IMR-90 (cell line): ENCODE measurements at regions of chr20 and their contacts with region 1.

Region 1: DNA sequence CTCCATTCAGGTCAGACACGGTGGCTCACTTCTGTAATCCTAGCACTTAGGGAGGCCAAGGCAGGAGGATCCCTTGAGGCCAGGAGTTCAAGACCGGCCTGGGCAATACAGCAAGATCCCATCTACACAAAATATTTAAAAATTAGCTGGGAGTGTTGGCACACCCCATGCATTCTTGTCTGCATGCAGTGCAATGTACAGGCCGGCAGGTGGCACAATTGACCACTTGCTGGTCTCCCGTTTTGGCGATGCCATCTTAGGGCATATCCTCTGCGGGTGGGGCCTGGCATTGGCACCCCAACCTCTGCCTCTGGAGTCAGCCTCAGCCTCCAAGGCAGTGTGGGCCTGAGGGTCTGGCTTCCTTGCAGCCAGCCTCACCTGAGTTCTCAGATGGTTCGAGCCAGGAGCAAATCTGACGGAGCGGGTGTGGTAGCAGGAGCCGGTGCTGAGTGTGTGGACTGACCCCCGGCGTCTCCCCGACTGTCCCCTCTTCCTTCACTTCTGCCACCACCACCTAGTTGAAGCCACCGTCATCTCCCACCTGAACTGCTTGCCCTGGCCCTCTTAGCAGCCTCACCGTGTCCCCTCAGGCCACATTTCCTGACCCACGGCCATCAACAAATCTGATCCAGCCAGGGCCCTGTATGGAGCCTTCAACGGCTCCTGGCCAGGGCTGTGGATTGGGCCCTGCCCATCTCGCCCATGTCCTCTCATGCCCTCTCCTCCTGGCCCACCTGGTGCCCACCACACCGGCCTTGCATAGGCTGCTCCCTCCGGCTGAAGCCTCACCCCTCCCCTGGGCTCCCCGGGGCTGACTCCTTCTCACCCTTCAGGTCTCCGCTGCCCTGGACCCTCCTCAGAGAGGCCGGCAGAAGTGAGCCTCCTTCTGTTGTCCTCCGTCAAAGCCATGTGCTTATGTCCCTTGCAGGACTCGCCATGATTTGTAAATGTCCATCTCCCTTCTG is 44.0 kb downstream of the EFCAB8 start:
- DNase-seq: peak; percentile 41
- ATAC-seq: peak; percentile 89
- H3K4me3 ChIP-seq: no peak overlapping the region
- H3K27ac ChIP-seq: no peak overlapping the region
- H3K4me1 ChIP-seq: no peaks in the 10 kb centered on the region
- H3K27me3 ChIP-seq: peaks cover 6% of the 10 kb centered on the region; the same call in 1 of the 2 replicates
- CTCF ChIP-seq: peak; percentile 87
- POLR2A ChIP-seq: no peak
- RAD21 ChIP-seq: peak; percentile 83

Region 2: DNA sequence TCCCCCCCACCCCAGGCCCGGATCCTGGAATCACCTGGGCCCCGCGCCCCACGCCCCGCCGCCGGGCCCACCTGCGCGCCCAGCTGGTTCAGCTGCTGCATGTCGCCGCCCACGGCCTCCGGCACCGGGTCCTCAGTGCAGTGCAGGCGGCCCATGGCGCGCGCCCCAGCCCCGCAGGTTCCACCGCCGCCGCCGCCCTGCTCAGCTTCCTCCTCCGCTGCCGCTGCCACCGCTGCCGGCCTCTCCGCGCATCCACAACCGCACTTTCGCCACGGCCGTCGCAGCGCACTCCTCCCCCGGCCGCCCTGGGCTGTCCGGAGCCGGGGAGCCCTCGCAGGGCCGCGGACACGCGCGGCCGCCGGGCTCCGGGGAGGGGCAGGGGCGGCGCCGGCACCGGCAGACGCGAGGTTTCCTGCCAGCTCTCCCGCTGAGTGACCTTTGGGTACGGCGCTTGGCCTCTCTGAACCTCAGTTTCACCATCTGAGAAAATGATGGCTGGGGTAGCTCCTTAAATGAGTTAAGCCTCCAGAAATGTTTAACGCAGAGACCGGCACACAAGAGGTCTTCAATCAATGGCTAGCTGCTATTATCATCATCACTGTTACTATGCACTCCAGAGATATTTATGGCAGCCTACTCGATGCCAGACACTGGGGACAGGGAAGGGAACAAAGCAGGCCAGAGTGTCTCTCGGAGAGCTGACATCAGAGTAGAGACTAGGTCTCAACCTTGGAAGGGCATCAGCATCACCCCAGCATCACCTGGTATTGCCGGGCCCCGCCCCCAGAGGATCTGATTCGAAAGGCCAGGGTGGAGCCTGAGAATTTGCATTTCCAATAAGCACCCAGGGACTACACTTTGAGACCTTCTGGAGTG is 159.3 kb before region 1 on chr20 and contains the start of gene COMMD7:
- CTCF ChIA-PET with region 1: no interaction called
- POLR2A ChIA-PET with region 1: no interaction called
- dilution Hi-C with region 1: no loop called
- in situ Hi-C with region 1: no loop called
- intact Hi-C with region 1: no loop called
- DNase-seq: peak; percentile 44
- ATAC-seq: peak; percentile 73
- H3K4me3 ChIP-seq: peak within 1 kb of the TSS; percentile 89
- H3K27ac ChIP-seq: peak within 1 kb of the TSS; percentile 62
- H3K4me1 ChIP-seq: peaks cover 16% of the 10 kb centered on the region
- H3K27me3 ChIP-seq: no peaks in the 10 kb centered on the region
- CTCF ChIP-seq: no peak
- POLR2A ChIP-seq: 0 out of 2 replicates have a peak, but pooled peaks have one; percentile 46
- RAD21 ChIP-seq: 0 out of 2 replicates have a peak, but pooled peaks have one; percentile 2
- total RNA-seq, gene COMMD7: 46.9 and 51.8 TPM in 2 replicates

Region 3: GRCh38 chr20:32779500-32780211 is 123.1 kb before region 1 on chr20:
- CTCF ChIA-PET with region 1: no interaction called
- POLR2A ChIA-PET with region 1: no interaction called
- dilution Hi-C with region 1: no loop called
- in situ Hi-C with region 1: no loop called
- intact Hi-C with region 1: no loop called
- DNase-seq: no peak
- ATAC-seq: 0 out of 2 replicates have a peak, but pooled peaks have one; percentile 33
- H3K4me3 ChIP-seq: no peak overlapping the region
- H3K27ac ChIP-seq: no peak overlapping the region
- H3K4me1 ChIP-seq: no peaks in the 10 kb centered on the region
- H3K27me3 ChIP-seq: no peaks in the 10 kb centered on the region
- CTCF ChIP-seq: no peak
- POLR2A ChIP-seq: no peak
- RAD21 ChIP-seq: no peak

Region 4: GRCh38 chr20:32945710-32946221 is 43.0 kb after region 1 on chr20:
- CTCF ChIA-PET with region 1: interaction called, 5 read pairs
- POLR2A ChIA-PET with region 1: no interaction called
- dilution Hi-C with region 1: no loop called
- in situ Hi-C with region 1: no loop called
- intact Hi-C with region 1: loop called (anchors 1 kb)
- DNase-seq: peak; percentile 34
- ATAC-seq: peak; percentile 86
- H3K4me3 ChIP-seq: no peak overlapping the region
- H3K27ac ChIP-seq: no peak overlapping the region
- H3K4me1 ChIP-seq: no peaks in the 10 kb centered on the region
- H3K27me3 ChIP-seq: peaks cover 10% of the 10 kb centered on the region
- CTCF ChIP-seq: peak; percentile 50
- POLR2A ChIP-seq: no peak
- RAD21 ChIP-seq: peak; percentile 51

Region 5: DNA sequence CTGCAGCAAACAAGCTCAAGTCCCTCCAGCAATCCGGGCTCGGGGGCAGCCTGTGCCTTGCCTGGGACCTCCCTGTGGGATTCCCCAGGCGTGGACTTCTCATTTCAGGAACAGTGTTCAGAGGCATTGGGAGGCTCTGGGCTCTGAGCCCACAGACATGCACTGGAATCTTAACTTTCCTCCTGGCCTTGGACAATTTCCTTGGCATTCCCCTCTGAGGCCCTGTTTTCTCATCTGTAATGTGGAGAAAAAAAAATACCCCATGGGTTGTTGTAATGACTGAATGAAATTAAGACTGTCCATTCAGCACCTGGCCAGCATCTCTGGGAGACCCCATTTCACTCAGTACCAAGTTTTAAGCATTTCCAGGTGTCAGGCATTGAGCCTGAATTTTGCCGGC is 194.3 kb after region 1 on chr20:
- CTCF ChIA-PET with region 1: interaction called, 3 read pairs
- POLR2A ChIA-PET with region 1: no interaction called
- dilution Hi-C with region 1: no loop called
- in situ Hi-C with region 1: no loop called
- intact Hi-C with region 1: loop called (anchors 1 kb)
- DNase-seq: no peak
- ATAC-seq: no peak
- H3K4me3 ChIP-seq: no peak overlapping the region
- H3K27ac ChIP-seq: no peak overlapping the region
- H3K4me1 ChIP-seq: no peaks in the 10 kb centered on the region
- H3K27me3 ChIP-seq: no peaks in the 10 kb centered on the region; the same call in 1 of the 2 replicates
- CTCF ChIP-seq: no peak
- POLR2A ChIP-seq: no peak
- RAD21 ChIP-seq: no peak

Region 6: GRCh38 chr20:33119725-33120720 is 217.3 kb after region 1 on chr20:
- CTCF ChIA-PET with region 1: no interaction called
- POLR2A ChIA-PET with region 1: no interaction called
- dilution Hi-C with region 1: no loop called
- in situ Hi-C with region 1: no loop called
- intact Hi-C with region 1: no loop called
- DNase-seq: no peak
- ATAC-seq: no peak
- H3K4me3 ChIP-seq: no peak overlapping the region
- H3K27ac ChIP-seq: no peak overlapping the region
- H3K4me1 ChIP-seq: no peaks in the 10 kb centered on the region
- H3K27me3 ChIP-seq: peaks cover 4% of the 10 kb centered on the region; the same call in 1 of the 2 replicates
- CTCF ChIP-seq: no peak
- POLR2A ChIP-seq: no peak
- RAD21 ChIP-seq: no peak

Region 7: GRCh38 chr20:33299111-33299603 is 396.4 kb after region 1 on chr20:
- CTCF ChIA-PET with region 1: no interaction called
- POLR2A ChIA-PET with region 1: interaction called, 5 read pairs
- dilution Hi-C with region 1: no loop called
- in situ Hi-C with region 1: no loop called
- intact Hi-C with region 1: loop called (anchors 2 kb)
- DNase-seq: peak; percentile 23
- ATAC-seq: peak; percentile 90
- H3K4me3 ChIP-seq: no peak overlapping the region
- H3K27ac ChIP-seq: no peak overlapping the region
- H3K4me1 ChIP-seq: no peaks in the 10 kb centered on the region
- H3K27me3 ChIP-seq: peaks cover 39% of the 10 kb centered on the region
- CTCF ChIP-seq: peak; percentile 74
- POLR2A ChIP-seq: no peak
- RAD21 ChIP-seq: peak; percentile 60